ENCODE measurements at regions of chr2 and their contacts with region 1.

Region 1: DNA sequence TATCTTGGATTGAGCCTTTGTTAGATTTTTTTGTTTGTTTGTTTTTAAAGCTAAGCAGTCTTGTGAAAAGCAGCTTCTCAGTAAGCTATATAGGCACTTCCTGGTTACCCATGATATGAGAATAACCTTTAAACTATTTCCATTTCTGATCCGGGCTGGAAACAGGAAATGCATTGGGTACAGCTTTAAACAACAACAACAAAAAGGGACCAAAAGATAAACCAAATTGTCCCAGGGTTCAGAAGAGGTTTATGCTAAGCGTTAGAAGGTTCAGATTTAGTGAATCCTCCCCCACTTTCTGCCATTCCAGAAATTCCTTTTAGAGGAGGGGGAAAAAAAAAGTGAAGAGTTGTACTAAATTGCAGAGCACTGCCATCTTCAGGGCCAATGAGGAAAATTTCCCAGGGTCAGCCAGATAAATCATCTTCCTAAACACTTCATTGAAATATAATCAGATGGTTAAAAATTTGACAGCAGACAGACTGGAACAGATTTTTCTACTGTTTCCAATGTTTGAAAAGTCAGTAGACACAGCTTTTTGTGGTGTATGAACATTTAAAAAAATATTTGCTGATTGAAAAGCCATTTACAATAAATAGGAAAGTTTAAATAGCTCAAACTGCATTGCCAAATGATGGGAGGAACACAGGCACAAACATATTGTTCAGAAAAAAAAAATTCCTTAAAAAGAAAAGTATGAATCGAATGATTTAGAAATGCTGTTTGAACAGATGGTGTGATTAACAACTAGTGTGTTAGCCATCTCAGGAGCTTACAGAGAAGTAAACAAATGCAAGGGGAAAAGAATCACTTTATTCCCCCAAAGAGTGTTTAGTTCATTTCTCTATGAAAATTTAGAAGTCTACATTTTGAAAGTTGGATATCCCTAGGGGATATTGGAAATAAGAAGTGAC is 189.9 kb upstream of the TANK start:
- DNase-seq: peak; percentile 90
- H3K4me3 ChIP-seq: peak overlapping the region in 1 of 3 experiments; percentile 53
- H3K27ac ChIP-seq: peak overlapping the region; percentile 71
- H3K4me1 ChIP-seq: no peaks in the 10 kb centered on the region
- H3K27me3 ChIP-seq: no peaks in the 10 kb centered on the region
- CTCF ChIP-seq: peak; percentile 51 to 53
- POLR2A ChIP-seq: no peak

Region 2: GRCh38 chr2:159226059-159226461 is 1744.2 kb before region 1 on chr2:
- CTCF ChIA-PET with region 1: no interaction called
- POLR2A ChIA-PET with region 1: no interaction called
- dilution Hi-C with region 1: no loop called
- intact Hi-C with region 1: no loop called
- DNase-seq: peak; percentile 57
- H3K4me3 ChIP-seq: no peak overlapping the region
- H3K27ac ChIP-seq: peak overlapping the region; percentile 78
- H3K4me1 ChIP-seq: peaks cover 27% of the 10 kb centered on the region
- H3K27me3 ChIP-seq: no peaks in the 10 kb centered on the region
- CTCF ChIP-seq: no peak
- POLR2A ChIP-seq: no peak

Region 3: DNA sequence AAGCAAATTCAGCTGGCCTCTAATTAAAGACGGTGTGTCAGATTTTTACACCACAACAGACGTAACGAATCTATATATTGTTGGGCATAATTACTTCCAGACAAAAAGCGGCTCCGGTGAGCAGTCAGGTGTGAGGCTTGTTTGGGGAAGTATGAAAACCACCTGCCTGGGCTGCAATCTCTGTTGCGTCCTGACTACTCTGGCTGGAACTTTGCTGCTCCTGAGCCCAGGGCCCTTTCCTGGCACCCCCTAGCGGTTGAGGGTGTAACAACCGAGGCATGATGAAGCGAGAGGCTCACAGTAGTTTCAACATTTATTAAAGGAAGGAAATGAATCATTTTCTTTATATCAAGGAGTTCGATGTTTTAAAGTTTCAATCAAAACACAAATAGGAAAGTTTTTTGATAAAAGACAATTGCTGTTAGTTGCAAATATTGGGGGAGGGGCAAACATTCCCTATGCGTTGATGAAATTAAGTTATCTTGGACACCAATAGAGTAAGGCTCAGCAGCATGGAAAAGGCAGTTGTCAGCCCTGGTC is 759.6 kb before region 1 on chr2:
- CTCF ChIA-PET with region 1: interaction called, 9 read pairs
- POLR2A ChIA-PET with region 1: no interaction called
- dilution Hi-C with region 1: no loop called
- intact Hi-C with region 1: loop called (anchors 5 kb)
- DNase-seq: peak; percentile 92
- H3K4me3 ChIP-seq: no peak overlapping the region
- H3K27ac ChIP-seq: peak overlapping the region; percentile 91
- H3K4me1 ChIP-seq: peaks cover 60% of the 10 kb centered on the region
- H3K27me3 ChIP-seq: no peaks in the 10 kb centered on the region
- CTCF ChIP-seq: peak; percentile 84 to 98
- POLR2A ChIP-seq: no peak

Region 4: GRCh38 chr2:160294339-160294803 is 675.9 kb before region 1 on chr2:
- CTCF ChIA-PET with region 1: interaction called, 35 read pairs
- POLR2A ChIA-PET with region 1: no interaction called
- dilution Hi-C with region 1: no loop called
- intact Hi-C with region 1: no loop called
- DNase-seq: peak; percentile 51
- H3K4me3 ChIP-seq: no peak overlapping the region
- H3K27ac ChIP-seq: peak overlapping the region; percentile 29
- H3K4me1 ChIP-seq: peaks cover 54% of the 10 kb centered on the region
- H3K27me3 ChIP-seq: no peaks in the 10 kb centered on the region
- CTCF ChIP-seq: no peak
- POLR2A ChIP-seq: no peak

Region 5: DNA sequence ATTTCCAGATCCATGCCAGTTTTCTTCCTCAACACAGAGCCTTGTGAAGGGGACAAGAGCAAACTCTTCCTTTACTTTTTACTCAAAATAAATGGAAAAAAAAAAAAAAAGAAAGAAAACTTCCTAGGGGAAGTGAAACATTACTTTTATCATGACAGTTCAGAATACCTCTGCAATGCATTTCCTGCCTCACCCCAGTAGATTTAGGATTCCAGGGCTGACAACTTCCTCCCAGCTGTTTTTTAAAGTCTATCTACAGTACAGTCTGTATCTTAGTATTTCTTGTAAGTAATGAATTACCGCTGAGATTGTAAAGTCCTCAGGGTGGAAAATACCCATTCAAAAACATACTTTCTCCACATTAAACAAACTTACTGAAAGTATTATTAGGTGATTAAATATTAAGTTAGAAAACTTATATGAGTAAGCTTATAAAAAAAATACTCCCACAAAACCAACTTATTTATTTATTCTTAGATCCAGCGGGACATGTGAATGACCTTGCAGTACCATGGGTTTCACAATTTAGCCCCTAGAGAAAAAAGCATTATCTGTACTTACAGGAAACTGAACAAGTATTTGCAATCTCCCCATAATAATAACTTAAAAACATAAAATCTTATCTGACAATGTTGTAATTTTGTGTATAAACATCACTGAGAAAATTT is 594.4 kb before region 1 on chr2:
- CTCF ChIA-PET with region 1: interaction called, 8 read pairs
- POLR2A ChIA-PET with region 1: no interaction called
- dilution Hi-C with region 1: no loop called
- intact Hi-C with region 1: loop called (anchors 1 kb)
- DNase-seq: peak; percentile 66
- H3K4me3 ChIP-seq: peak overlapping the region in 1 of 3 experiments; percentile 22
- H3K27ac ChIP-seq: peak overlapping the region; percentile 85
- H3K4me1 ChIP-seq: peaks cover 97% of the 10 kb centered on the region
- H3K27me3 ChIP-seq: no peaks in the 10 kb centered on the region
- CTCF ChIP-seq: no peak
- POLR2A ChIP-seq: peak; percentile 58

Region 6: GRCh38 chr2:160454070-160454797 is 516.1 kb before region 1 on chr2:
- CTCF ChIA-PET with region 1: no interaction called
- POLR2A ChIA-PET with region 1: no interaction called
- dilution Hi-C with region 1: no loop called
- intact Hi-C with region 1: no loop called
- DNase-seq: peak; percentile 35
- H3K4me3 ChIP-seq: no peak overlapping the region
- H3K27ac ChIP-seq: no peak overlapping the region
- H3K4me1 ChIP-seq: peaks cover 23% of the 10 kb centered on the region
- H3K27me3 ChIP-seq: no peaks in the 10 kb centered on the region
- CTCF ChIP-seq: no peak
- POLR2A ChIP-seq: no peak

Region 7: DNA sequence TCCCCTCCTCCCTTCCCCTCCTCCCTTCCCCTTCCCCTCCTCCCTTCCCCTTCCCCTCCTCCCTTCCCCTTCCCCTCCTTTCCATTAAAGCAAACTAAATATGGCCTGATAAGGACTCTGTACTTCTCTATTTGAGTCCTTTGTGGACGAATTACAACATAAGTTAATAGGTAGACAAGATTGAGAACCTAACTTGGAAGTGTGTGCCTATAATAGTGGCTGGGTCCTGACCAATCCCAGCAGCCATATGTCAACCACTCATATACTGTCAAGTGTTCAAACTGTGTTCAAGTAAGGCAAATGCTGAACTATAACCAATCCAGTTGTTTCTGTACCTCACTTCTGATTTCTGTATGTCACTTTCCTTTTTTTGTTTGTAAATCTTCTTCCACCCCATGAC is 379.6 kb before region 1 on chr2:
- CTCF ChIA-PET with region 1: interaction called, 9 read pairs
- POLR2A ChIA-PET with region 1: no interaction called
- dilution Hi-C with region 1: no loop called
- intact Hi-C with region 1: loop called (anchors 1 kb)
- DNase-seq: peak; percentile 10
- H3K4me3 ChIP-seq: no peak overlapping the region
- H3K27ac ChIP-seq: no peak overlapping the region
- H3K4me1 ChIP-seq: no peaks in the 10 kb centered on the region
- H3K27me3 ChIP-seq: no peaks in the 10 kb centered on the region
- CTCF ChIP-seq: no peak
- POLR2A ChIP-seq: no peak

Region 8: GRCh38 chr2:160994141-160995002 is 24.1 kb after region 1 on chr2:
- CTCF ChIA-PET with region 1: interaction called, 27 read pairs
- POLR2A ChIA-PET with region 1: no interaction called
- dilution Hi-C with region 1: no loop called
- intact Hi-C with region 1: no loop called
- DNase-seq: peak; percentile 86
- H3K4me3 ChIP-seq: no peak overlapping the region
- H3K27ac ChIP-seq: no peak overlapping the region
- H3K4me1 ChIP-seq: peaks cover 2% of the 10 kb centered on the region
- H3K27me3 ChIP-seq: no peaks in the 10 kb centered on the region
- CTCF ChIP-seq: peak; percentile 58 to 70
- POLR2A ChIP-seq: no peak

Region 9: GRCh38 chr2:161044095-161044865 is 74.0 kb after region 1 on chr2:
- CTCF ChIA-PET with region 1: no interaction called
- POLR2A ChIA-PET with region 1: no interaction called
- dilution Hi-C with region 1: no loop called
- intact Hi-C with region 1: no loop called
- DNase-seq: no peak
- H3K4me3 ChIP-seq: no peak overlapping the region
- H3K27ac ChIP-seq: no peak overlapping the region
- H3K4me1 ChIP-seq: no peaks in the 10 kb centered on the region
- H3K27me3 ChIP-seq: peaks cover 28 to 38% of the 10 kb centered on the region in 2 experiments
- CTCF ChIP-seq: no peak
- POLR2A ChIP-seq: no peak

Region 10: DNA sequence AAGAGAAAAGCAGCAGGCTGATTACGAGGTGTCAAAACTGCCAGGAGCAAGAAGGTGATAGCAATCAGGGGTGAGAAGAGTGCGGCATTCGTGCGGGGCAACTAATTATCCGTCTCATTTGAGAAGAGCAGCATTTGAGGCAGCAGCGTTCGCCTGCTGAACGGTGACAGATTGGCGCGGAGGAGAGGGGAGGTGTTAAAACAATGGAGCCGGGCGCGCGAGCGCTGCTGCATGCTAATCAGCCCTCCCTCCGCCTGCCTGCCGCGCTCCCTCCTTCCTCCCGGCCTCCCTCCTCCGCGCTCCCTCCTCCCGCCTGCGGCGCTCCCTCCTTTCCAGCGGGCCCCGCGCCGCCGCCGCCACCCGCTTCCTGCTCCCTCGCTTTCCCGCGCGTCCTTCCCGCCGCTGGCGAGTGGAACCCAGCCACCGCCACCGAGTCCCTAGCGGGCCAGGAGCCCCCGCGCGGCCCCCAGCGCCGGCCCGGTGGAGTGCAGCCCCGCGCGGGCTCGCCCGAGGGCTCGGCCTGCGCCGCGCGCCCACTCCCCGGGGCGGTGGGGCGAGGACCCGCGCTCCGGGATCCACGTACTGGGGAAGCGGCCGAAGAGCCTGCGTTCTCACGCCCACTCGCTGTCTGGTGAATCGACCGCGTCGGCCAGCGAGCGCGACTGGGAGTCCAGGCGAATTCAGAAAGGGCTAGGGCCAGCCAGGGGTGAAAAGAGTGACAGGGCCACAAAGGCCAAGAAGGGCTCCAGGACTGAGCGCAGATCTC is 268.4 kb after region 1 on chr2:
- CTCF ChIA-PET with region 1: no interaction called
- POLR2A ChIA-PET with region 1: no interaction called
- dilution Hi-C with region 1: no loop called
- intact Hi-C with region 1: no loop called
- DNase-seq: peak; percentile 68
- H3K4me3 ChIP-seq: peak overlapping the region; percentile 20 to 59 (median 49)
- H3K27ac ChIP-seq: no peak overlapping the region
- H3K4me1 ChIP-seq: peaks cover 12% of the 10 kb centered on the region
- H3K27me3 ChIP-seq: no peaks in the 10 kb centered on the region
- CTCF ChIP-seq: no peak
- POLR2A ChIP-seq: no peak